CD8-positive, alpha-beta T cell (primary cell): ENCODE measurements at regions of chr3 and their contacts with region 1.

Region 1: GRCh38 chr3:113495035-113495434 is 19.9 kb downstream of the SPICE1 start:
- DNase-seq: peak in 6 of 9 experiments; percentile 38 to 67 (median 54)
- ATAC-seq: no peak
- H3K4me3 ChIP-seq: no peak overlapping the region
- H3K4me3 Mint-ChIP-seq: no peak overlapping the region
- H3K27ac ChIP-seq: no peak overlapping the region
- H3K27ac Mint-ChIP-seq: no peak overlapping the region
- H3K4me1 ChIP-seq: no peaks in the 10 kb centered on the region
- H3K4me1 Mint-ChIP-seq: no peaks in the 10 kb centered on the region
- H3K27me3 ChIP-seq: no peaks in the 10 kb centered on the region
- H3K27me3 Mint-ChIP-seq: no peaks in the 10 kb centered on the region
- CTCF ChIP-seq: peak; percentile 54

Region 2: GRCh38 chr3:113514265-113514769 is 19.3 kb after region 1 on chr3:
- CTCF ChIA-PET with region 1: interaction called, 40 read pairs
- POLR2A ChIA-PET with region 1: interaction called, 5 read pairs
- intact Hi-C with region 1: loop called (anchors 1 to 2 kb)
- DNase-seq: no peak
- ATAC-seq: no peak
- H3K4me3 ChIP-seq: peak overlapping the region; percentile 82 to 96
- H3K4me3 Mint-ChIP-seq: no peak overlapping the region
- H3K27ac ChIP-seq: peak overlapping the region; percentile 89 to 91
- H3K27ac Mint-ChIP-seq: no peak overlapping the region
- H3K4me1 ChIP-seq: peaks cover 10% of the 10 kb centered on the region
- H3K4me1 Mint-ChIP-seq: peaks cover 18% of the 10 kb centered on the region
- H3K27me3 ChIP-seq: no peaks in the 10 kb centered on the region
- H3K27me3 Mint-ChIP-seq: peaks cover 3% of the 10 kb centered on the region
- CTCF ChIP-seq: no peak